ENCODE measurements at regions of chrX and their contacts with region 1.

Region 1: DNA sequence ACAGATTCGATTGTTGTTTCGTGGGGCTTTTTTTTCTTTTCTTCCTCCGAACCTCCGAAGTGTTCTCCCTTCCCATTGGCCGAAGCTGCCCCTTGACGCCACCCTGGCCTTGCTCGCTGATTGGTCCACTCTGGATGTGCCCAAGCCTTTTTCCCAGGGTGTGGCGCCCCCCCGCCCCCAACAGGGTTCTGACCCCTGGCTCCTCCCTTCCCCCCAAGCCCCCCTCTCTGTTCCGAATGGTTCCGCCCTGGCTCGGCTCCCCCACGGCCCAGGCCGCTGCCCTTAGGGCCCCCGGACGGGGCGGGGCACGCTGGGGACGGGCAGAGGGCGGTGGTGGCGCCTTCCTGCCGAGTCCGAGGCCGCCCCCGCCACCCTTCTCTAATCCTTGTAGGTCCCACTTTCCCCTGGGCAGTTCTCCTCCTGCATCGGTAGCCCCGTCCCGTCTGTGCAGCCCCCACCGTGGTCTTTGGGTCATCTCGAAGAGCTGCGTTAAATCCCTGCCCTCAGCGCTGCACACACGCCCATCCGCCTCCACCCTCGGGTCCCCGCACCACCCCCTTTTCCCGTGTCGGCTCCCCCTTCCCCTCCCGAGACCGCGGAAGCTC is 25.5 kb downstream of the UTP14A start:
- DNase-seq: peak; percentile 93 to 95 (median 95)
- ATAC-seq: peak; percentile 95 to 97 (median 95)
- H3K4me3 ChIP-seq: peak overlapping the region; percentile 37 to 81 (median 62)
- H3K27ac ChIP-seq: peak overlapping the region; percentile 87 to 99 (median 92)
- H3K4me1 ChIP-seq: peaks cover 0 to 5% (median 0%) of the 10 kb centered on the region in 12 donors
- H3K27me3 ChIP-seq: no peaks in the 10 kb centered on the region
- CTCF ChIP-seq: no peak
- POLR2A ChIP-seq: no peak

Region 2: GRCh38 chrX:128287693-128288092 is 1643.8 kb before region 1 on chrX:
- intact Hi-C with region 1: no loop called
- DNase-seq: no peak
- ATAC-seq: no peak
- H3K4me3 ChIP-seq: no peak overlapping the region
- H3K27ac ChIP-seq: no peak overlapping the region
- H3K4me1 ChIP-seq: no peaks in the 10 kb centered on the region
- H3K27me3 ChIP-seq: no peaks in the 10 kb centered on the region
- CTCF ChIP-seq: no peak
- POLR2A ChIP-seq: no peak

Region 3: GRCh38 chrX:129900054-129900453 is 31.5 kb before region 1 on chrX:
- intact Hi-C with region 1: no loop called
- DNase-seq: no peak
- ATAC-seq: no peak
- H3K4me3 ChIP-seq: no peak overlapping the region
- H3K27ac ChIP-seq: no peak overlapping the region
- H3K4me1 ChIP-seq: no peaks in the 10 kb centered on the region
- H3K27me3 ChIP-seq: no peaks in the 10 kb centered on the region
- CTCF ChIP-seq: no peak
- POLR2A ChIP-seq: no peak

Region 4: DNA sequence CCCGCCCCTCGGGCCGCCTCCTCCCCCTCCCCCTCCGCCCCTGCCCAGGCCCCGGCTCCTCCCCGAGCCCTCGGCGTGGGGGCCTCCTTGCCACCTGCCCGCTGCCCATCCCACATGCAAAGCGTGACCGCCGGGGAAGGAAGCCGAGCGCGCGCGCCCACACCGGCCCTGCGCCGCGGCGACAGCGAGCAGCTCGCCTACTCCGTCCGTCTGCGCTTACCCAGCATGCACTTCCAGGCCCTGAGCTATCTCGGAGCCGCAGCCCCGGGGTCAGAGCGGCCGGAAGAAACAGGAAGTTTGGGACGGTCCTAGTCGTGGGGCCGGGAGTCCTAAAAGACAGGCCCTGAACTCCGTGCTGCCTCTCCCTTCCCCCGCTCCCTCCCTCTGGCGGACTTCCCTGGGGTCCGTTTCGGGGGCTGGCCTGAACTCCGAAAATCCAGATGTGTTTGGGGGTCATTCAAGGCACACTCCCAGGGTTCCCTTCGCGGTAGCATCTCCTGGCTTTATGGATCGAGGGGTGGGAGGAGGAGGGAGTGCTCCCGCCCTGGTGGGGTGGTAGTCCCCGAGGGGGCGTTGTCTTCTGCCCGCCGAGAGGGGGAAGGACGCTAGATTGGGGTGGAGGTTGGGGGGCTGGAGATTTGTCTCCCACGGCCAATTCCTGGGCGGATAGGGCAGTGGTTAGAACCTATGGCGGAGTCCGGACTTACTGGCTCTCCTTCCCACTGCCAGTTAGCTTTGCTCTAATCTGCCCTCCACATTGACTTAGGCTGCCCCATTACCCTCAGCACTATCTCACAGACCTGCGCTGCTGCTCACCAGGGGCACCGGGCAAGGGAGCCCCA is 25.9 kb after region 1 on chrX:
- intact Hi-C with region 1: loop called in 1 of 10 experiments (anchors 2 kb)
- DNase-seq: peak; percentile 67 to 81 (median 80)
- ATAC-seq: peak; percentile 68 to 88 (median 86)
- H3K4me3 ChIP-seq: peak overlapping the region; percentile 4 to 55 (median 50)
- H3K27ac ChIP-seq: peak overlapping the region in 11 of 12 donors; percentile 28 to 79 (median 59)
- H3K4me1 ChIP-seq: peaks cover 0 to 17% (median under 1%) of the 10 kb centered on the region in 12 donors
- H3K27me3 ChIP-seq: peaks cover 0 to 6% (median 0%) of the 10 kb centered on the region in 9 donors
- CTCF ChIP-seq: no peak
- POLR2A ChIP-seq: peak in 1 of 2 donors; percentile 31

Region 5: GRCh38 chrX:129982274-129983251 is 51.0 kb after region 1 on chrX and contains the start of gene BCORL1:
- intact Hi-C with region 1: loop called in 9 of 10 experiments (anchors 1 to 5 kb)
- DNase-seq: peak; percentile 90 to 93 (median 92)
- ATAC-seq: peak; percentile 93 to 98 (median 96)
- H3K4me3 ChIP-seq: peak within 1 kb of the TSS in 3 of 12 donors; percentile 39 to 60 (median 48)
- H3K27ac ChIP-seq: peak within 1 kb of the TSS in 11 of 12 donors; percentile 39 to 87 (median 70)
- H3K4me1 ChIP-seq: peaks cover 0 to 10% (median 0%) of the 10 kb centered on the region in 12 donors
- H3K27me3 ChIP-seq: no peaks in the 10 kb centered on the region
- CTCF ChIP-seq: no peak
- POLR2A ChIP-seq: peak in 1 of 2 donors; percentile 71
- total RNA-seq, gene BCORL1: 5.3 to 11.0 (median 9.0) TPM

Region 6: DNA sequence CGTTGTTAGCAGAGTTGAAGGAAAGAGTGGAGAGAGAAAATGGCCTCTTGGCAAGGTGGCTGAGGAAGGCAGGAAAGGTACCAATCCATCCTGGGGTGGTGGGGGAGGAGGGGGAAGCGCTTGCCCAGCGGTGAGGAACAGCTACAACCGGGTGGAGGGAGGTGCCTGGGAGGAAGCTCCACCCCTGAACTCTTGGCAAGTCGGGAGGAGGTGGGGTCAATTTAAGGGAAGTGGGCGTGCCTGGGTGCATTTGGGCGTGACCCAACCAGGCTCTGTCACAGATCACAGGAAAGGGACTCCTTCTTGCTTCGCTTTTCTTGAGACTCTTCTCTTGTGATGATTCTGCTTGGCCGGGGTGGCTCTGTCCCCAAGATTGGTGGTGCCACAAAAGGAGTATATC is 92.6 kb after region 1 on chrX:
- intact Hi-C with region 1: loop called in 8 of 10 experiments (anchors 2 to 10 kb)
- DNase-seq: peak; percentile 76 to 82 (median 81)
- ATAC-seq: peak; percentile 80 to 98 (median 92)
- H3K4me3 ChIP-seq: no peak overlapping the region
- H3K27ac ChIP-seq: peak overlapping the region in 4 of 12 donors; percentile 6 to 41 (median 26)
- H3K4me1 ChIP-seq: peaks cover 0 to 14% (median 5%) of the 10 kb centered on the region in 12 donors
- H3K27me3 ChIP-seq: no peaks in the 10 kb centered on the region
- CTCF ChIP-seq: no peak
- POLR2A ChIP-seq: no peak

Region 7: DNA sequence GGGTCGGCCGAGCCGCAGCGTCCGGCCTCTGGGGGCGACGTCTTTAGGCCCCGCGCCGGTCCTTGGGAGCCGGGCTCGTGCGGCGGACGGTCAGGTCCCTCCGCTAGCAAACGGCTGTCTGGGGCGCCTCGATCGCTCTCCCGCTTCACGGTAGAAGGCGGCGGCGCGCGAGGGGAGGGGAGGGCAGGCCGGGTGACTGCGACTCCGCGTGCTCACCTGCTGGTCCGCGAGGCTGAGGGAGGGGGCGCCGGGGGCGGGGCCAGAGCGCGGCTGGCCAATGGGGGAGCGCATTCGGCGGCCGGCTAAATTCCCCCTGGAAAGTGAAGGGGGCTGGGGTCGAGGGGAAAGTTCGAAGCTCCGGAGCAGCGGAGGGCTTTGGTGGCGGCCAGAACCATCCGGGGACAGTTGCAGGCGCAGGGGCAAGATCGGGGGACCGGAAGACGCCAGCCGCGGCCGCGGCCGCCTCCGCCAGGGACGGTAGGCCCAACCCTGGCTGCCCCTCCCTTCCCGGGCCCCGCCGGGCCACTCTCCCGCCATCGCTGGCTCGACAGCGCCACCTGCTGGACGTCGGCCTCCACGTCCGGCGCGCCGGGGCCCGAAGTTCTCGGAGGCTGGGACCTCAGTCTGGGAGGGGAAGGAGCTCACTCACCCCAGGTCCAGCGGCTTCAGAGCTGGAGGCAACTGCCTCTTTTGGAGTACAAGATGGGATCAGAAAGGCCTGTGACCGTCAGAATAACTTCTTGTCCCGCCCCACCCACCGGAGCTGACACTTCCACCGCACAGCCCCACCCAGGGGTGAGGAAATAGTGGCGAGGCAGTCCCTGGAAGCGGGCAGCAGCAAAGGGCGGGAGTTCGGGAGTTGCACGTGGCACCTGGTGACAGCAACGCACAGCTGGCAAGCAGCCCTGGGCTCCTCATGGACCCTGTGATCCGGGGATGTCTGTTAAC is 128.9 kb after region 1 on chrX:
- intact Hi-C with region 1: loop called in 5 of 10 experiments (anchors 2 to 10 kb)
- DNase-seq: peak; percentile 74 to 92 (median 81)
- ATAC-seq: peak; percentile 81 to 94 (median 92)
- H3K4me3 ChIP-seq: peak overlapping the region; percentile 21 to 67 (median 55)
- H3K27ac ChIP-seq: peak overlapping the region in 11 of 12 donors; percentile 18 to 77 (median 43)
- H3K4me1 ChIP-seq: peaks cover 0 to 6% (median 0%) of the 10 kb centered on the region in 12 donors
- H3K27me3 ChIP-seq: no peaks in the 10 kb centered on the region
- CTCF ChIP-seq: peak; percentile 74 to 90 (median 80)
- POLR2A ChIP-seq: peak in 1 of 2 donors; percentile 9

Region 8: GRCh38 chrX:130165703-130166502 is 234.4 kb after region 1 on chrX and contains the start of gene AIFM1:
- intact Hi-C with region 1: loop called in 1 of 10 experiments (anchors 10 kb)
- DNase-seq: peak; percentile 91 to 95 (median 94)
- ATAC-seq: peak; percentile 97 to 98 (median 98)
- H3K4me3 ChIP-seq: peak within 1 kb of the TSS; percentile 8 to 93 (median 68)
- H3K27ac ChIP-seq: peak within 1 kb of the TSS; percentile 80 to 97 (median 88)
- H3K4me1 ChIP-seq: peaks cover 0 to 25% (median 12%) of the 10 kb centered on the region in 12 donors
- H3K27me3 ChIP-seq: peaks cover 0 to 4% (median 0%) of the 10 kb centered on the region in 9 donors
- CTCF ChIP-seq: no peak
- POLR2A ChIP-seq: peak in 1 of 2 donors; percentile 61
- total RNA-seq, gene AIFM1: 73.7 to 146 (median 109) TPM

Measured in heart left ventricle (tissue), 16 donors.